Right cardiac atrium (tissue), 5 donors: ENCODE measurements at regions of chr11 and their contacts with region 1.

Region 1: DNA sequence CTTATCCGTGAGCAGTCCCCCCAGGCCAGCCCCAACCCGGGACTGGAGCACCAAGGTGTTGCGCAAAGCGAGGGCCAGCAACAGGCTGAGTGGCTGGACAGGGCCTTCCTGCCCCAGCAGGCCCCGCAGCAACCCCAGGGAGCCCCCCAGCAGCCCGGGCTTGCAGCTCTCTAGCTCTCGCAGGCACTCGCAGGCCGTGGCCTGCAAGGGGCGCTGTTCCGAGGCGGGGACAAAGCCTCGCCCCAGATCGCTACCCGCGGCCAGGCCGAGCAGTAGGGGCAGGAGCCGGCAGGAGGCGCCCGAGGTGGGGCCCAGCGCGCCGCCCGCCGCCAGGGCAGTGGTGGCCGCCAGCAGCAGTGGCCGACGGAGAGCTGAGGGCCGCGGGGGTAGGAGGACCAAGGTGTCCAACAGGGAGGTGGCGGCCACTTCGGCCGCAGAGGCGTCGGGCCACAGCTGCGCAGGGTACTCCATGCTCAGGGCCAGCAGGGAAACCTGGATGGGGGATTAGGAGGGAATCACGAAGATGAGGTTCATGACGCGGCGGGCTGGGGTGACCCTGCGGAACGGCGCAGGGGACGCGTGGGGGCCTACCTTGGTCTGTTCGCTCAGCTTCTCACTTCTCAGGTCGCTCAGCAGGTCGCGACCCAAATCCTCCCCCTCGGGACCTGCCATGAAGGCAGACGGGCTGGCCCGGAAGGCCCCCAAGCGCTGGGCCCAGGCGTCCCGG is 762 bp downstream of the AP5B1 start:
- DNase-seq: peak; percentile 82 to 93 (median 91)
- ATAC-seq: peak; percentile 82 to 87
- H3K4me3 ChIP-seq: peak overlapping the region; percentile 94
- H3K27ac ChIP-seq: peak overlapping the region; percentile 26
- H3K4me1 ChIP-seq: no peaks in the 10 kb centered on the region
- H3K27me3 ChIP-seq: no peaks in the 10 kb centered on the region

Region 2: DNA sequence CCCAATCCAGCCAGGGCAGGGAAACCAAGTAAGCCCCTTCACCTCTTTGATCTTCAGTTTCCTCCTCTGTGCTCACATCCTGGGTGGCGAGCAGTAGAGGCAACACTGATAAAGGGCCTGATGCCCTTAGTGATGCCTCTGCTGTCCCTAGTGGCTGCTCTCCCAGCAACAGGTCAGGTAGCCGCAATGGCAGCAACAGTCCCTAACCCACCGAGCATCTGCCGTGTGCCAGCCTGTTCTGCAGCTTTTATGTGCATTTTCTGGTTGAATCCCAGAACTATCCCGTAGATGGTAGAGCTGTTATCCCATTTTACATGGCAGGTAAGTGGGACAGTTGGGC is 249.9 kb before region 1 on chr11:
- intact Hi-C with region 1: no loop called
- DNase-seq: peak in 1 of 3 donors; percentile 13
- ATAC-seq: no peak
- H3K4me3 ChIP-seq: no peak overlapping the region
- H3K27ac ChIP-seq: no peak overlapping the region
- H3K4me1 ChIP-seq: peaks cover 3% of the 10 kb centered on the region
- H3K27me3 ChIP-seq: no peaks in the 10 kb centered on the region

Region 3: GRCh38 chr11:65711785-65712632 is 68.0 kb before region 1 on chr11 and contains the start of gene KAT5:
- intact Hi-C with region 1: loop called in 2 of 4 experiments (anchors 5 to 10 kb)
- DNase-seq: peak; percentile 98 to 99 (median 99)
- ATAC-seq: peak; percentile 93
- H3K4me3 ChIP-seq: peak within 1 kb of the TSS; percentile 77
- H3K27ac ChIP-seq: peak within 1 kb of the TSS; percentile 96
- H3K4me1 ChIP-seq: peaks cover 4% of the 10 kb centered on the region
- H3K27me3 ChIP-seq: no peaks in the 10 kb centered on the region
- total RNA-seq, gene KAT5: 49.0 to 57.2 (median 54.0) TPM

Region 4: GRCh38 chr11:65726660-65727059 is 53.4 kb before region 1 on chr11:
- intact Hi-C with region 1: no loop called
- DNase-seq: no peak
- ATAC-seq: no peak
- H3K4me3 ChIP-seq: no peak overlapping the region
- H3K27ac ChIP-seq: no peak overlapping the region
- H3K4me1 ChIP-seq: no peaks in the 10 kb centered on the region
- H3K27me3 ChIP-seq: no peaks in the 10 kb centered on the region